Common myeloid progenitor, CD34-positive (primary cell): ENCODE measurements at regions of chr13 and their contacts with region 1.

Region 1: GRCh38 chr13:26482451-26483197 is 74.9 kb upstream of the WASF3 start:
- DNase-seq: peak; percentile 86 to 93 (median 91)
- H3K4me3 ChIP-seq: peak overlapping the region in 4 of 7 experiments; percentile 50 to 71 (median 58)
- H3K27ac ChIP-seq: no peak overlapping the region
- H3K4me1 ChIP-seq: no peaks in the 10 kb centered on the region
- H3K27me3 ChIP-seq: no peaks in the 10 kb centered on the region

Region 2: DNA sequence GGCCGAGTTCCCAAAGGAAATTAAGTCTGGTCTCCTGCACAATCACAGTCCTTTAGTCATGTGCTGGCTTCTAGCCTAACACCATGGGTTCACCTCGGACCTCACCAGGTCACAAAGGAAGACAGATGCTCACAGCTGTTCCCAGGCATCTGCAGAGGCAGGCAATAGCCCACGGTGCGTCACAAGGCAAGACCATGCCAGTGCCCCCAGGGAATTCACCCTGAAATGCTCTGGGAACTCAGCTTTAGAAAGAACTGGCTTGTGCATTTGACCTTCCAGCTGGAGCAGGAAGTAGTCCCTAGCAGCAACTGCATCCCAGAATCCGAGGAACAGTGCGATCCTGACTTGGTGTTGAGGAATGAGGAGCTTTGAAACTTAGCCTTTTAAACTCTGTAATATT is 22.0 kb before region 1 on chr13:
- CTCF ChIA-PET with region 1: no interaction called
- POLR2A ChIA-PET with region 1: no interaction called
- DNase-seq: no peak
- H3K4me3 ChIP-seq: no peak overlapping the region
- H3K27ac ChIP-seq: no peak overlapping the region
- H3K4me1 ChIP-seq: no peaks in the 10 kb centered on the region
- H3K27me3 ChIP-seq: peaks cover 0 to 9% (median 5%) of the 10 kb centered on the region in 5 experiments

Region 3: DNA sequence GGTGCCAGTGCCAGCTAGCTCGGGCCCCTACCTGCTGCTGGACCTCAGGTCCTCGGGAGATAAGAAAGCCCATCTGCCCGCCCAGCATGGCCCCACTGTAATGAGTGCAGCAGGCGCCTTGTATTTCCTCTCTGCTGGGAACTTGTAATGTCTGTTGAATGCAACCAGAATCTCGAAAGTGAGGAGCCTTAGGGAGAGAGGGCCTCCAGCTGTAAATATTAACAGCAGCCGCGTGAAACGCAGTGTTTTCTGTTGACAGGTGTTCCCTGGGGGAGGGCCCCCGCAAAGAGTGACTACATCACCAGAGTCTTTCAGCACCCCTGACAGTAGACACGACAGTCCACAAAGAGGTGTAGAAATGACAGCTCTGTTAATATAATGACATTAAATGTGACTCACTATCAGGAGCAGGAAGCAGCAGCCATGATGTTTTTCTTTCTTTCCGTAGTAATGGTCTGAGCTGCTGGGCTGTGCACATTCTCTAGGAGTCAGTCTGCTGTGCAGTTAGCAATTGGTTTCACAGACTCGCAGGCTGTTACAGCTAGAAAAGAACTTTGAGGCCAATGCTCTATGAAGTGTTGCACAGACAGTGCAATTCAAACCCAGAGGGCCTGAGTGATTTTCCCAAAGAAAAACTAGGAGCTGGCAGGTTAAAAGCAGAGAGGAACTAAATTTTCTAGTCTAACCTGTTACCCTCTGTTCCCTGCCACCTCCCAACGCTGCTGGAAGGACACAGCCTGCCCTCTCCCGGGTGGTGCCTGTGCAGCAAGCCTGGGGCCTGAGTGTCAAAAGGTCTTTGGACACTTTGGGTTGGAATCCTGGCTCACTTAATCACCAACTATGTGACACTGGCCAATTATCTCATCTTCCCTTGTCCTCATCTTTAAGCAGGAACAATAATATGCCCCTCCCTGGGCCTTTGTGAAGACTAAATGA is 16.3 kb after region 1 on chr13:
- CTCF ChIA-PET with region 1: interaction called, 17 read pairs
- POLR2A ChIA-PET with region 1: no interaction called
- DNase-seq: no peak
- H3K4me3 ChIP-seq: no peak overlapping the region
- H3K27ac ChIP-seq: no peak overlapping the region
- H3K4me1 ChIP-seq: peaks cover 0 to 16% (median 3%) of the 10 kb centered on the region in 4 experiments
- H3K27me3 ChIP-seq: peaks cover 0 to 2% (median 0%) of the 10 kb centered on the region in 5 experiments

Region 4: DNA sequence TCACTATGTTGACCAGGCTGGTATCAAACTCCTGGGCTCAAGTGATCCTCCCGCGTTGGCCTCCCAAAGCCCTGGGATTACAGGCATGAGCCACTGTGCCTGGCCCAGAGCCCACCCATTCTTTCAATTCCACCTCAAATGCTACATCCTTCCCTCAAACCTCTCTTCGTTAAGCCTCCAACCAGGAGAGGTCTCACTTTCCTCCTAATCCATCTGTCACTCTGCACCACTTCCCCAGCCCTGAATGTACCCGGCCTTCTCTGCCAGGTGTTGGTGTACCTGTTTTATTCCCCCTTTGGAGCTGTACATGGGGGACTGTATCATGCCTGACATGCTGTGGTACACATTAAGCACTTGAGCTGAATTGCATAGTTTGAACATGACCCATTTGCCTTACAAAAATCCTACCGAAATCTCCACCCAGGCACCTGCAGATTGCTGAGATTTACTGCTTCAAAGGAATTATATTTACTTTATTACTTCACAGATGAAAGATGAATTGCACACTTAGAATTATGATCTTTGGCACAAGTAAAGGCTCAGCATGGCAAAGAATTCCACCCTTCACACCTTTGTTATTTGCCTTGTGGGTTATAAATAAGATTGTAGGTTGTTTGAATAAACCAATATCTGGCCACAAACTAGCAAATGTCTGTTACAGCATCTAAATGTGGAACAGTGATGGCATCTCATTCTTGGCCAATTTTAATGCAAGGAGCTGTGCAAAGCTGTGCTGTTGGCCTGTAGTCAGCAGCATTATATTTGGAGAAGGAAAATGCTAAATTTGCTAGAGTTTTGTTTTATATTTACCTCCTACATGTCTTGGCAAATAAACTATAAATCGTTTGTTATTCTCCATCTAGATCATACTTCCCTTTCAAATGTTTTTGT is 59.3 kb after region 1 on chr13:
- CTCF ChIA-PET with region 1: no interaction called
- POLR2A ChIA-PET with region 1: no interaction called
- DNase-seq: no peak
- H3K4me3 ChIP-seq: no peak overlapping the region
- H3K27ac ChIP-seq: no peak overlapping the region
- H3K4me1 ChIP-seq: no peaks in the 10 kb centered on the region
- H3K27me3 ChIP-seq: peaks cover 0 to 17% (median 10%) of the 10 kb centered on the region in 5 experiments